ENCODE measurements at regions of chr9 and their contacts with region 1.

Region 1: DNA sequence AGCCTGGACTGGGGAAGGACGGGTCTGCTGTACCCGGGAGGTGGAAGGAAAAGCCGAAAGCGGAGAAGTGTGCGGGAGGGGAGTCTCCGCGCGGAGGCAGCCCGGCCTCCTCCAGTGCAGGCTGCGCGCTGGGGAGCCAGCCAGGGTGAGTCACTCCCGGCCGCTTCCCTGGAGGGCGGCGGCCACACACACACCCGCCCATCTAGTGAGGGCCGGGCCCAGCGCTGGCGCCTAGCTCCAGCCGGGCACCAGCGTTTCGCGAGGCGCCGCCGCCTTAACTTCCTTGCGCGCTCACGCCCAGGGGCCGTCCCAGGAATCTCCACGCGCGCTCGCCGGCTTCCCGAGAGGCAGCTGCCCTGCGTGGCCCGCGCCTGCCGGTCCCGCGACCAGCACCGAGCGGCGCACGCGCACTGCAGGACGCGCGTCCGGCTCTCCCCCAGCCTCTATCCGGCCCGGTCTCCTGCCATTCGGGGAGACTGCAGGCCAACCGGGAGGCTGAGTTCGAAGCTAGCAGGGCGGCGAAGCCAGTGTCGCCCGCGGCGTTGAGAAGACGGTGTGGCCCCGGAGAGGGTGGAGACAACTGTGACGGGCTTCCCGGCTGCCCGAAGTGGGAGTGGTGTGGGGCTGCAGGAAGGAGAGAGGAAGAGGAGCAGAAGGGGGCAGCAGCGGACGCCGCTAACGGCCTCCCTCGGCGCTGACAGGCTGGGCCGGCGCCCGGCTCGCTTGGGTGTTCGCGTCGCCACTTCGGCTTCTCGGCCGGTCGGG is at the start of gene JAK2:
- DNase-seq: peak; percentile 88
- ATAC-seq: peak; percentile 94
- H3K4me3 ChIP-seq: peak within 1 kb of the TSS; percentile 67 to 85 (median 81)
- H3K27ac ChIP-seq: peak within 1 kb of the TSS; percentile 91
- H3K4me1 ChIP-seq: peaks cover 41% of the 10 kb centered on the region
- H3K27me3 ChIP-seq: no peaks in the 10 kb centered on the region
- CTCF ChIP-seq: peak; percentile 82
- EP300 ChIP-seq: no peak
- POLR2A ChIP-seq: peak; percentile 69 to 70
- RAD21 ChIP-seq: no peak; the same call in none of the 2 replicates
- total RNA-seq, gene JAK2: 4.1 and 5.8 TPM in 2 replicates

Region 2: GRCh38 chr9:4590430-4591122 is 394.2 kb before region 1 on chr9:
- CTCF ChIA-PET with region 1: no interaction called
- POLR2A ChIA-PET with region 1: no interaction called
- in situ Hi-C with region 1: no loop called
- intact Hi-C with region 1: no loop called
- DNase-seq: no peak
- ATAC-seq: no peak
- H3K4me3 ChIP-seq: no peak overlapping the region
- H3K27ac ChIP-seq: no peak overlapping the region
- H3K4me1 ChIP-seq: no peaks in the 10 kb centered on the region
- H3K27me3 ChIP-seq: no peaks in the 10 kb centered on the region
- CTCF ChIP-seq: no peak
- EP300 ChIP-seq: no peak
- POLR2A ChIP-seq: no peak
- RAD21 ChIP-seq: no peak

Region 3: GRCh38 chr9:4740638-4741364 is 244.0 kb before region 1 on chr9 and contains the start of gene AK3:
- CTCF ChIA-PET with region 1: no interaction called
- POLR2A ChIA-PET with region 1: interaction called, 17 read pairs
- in situ Hi-C with region 1: no loop called
- intact Hi-C with region 1: no loop called
- DNase-seq: peak; percentile 83
- ATAC-seq: peak; percentile 93
- H3K4me3 ChIP-seq: peak within 1 kb of the TSS; percentile 93 to 98 (median 96)
- H3K27ac ChIP-seq: peak within 1 kb of the TSS; percentile 100
- H3K4me1 ChIP-seq: peaks cover 40% of the 10 kb centered on the region
- H3K27me3 ChIP-seq: no peaks in the 10 kb centered on the region
- CTCF ChIP-seq: peak; percentile 70
- EP300 ChIP-seq: peak in 1 of 2 experiments; percentile 50; a peak in 1 of 4 replicates
- POLR2A ChIP-seq: peak; percentile 87 to 89
- RAD21 ChIP-seq: peak; percentile 86
- total RNA-seq, gene AK3: 109 and 153 TPM in 2 replicates

Region 4: DNA sequence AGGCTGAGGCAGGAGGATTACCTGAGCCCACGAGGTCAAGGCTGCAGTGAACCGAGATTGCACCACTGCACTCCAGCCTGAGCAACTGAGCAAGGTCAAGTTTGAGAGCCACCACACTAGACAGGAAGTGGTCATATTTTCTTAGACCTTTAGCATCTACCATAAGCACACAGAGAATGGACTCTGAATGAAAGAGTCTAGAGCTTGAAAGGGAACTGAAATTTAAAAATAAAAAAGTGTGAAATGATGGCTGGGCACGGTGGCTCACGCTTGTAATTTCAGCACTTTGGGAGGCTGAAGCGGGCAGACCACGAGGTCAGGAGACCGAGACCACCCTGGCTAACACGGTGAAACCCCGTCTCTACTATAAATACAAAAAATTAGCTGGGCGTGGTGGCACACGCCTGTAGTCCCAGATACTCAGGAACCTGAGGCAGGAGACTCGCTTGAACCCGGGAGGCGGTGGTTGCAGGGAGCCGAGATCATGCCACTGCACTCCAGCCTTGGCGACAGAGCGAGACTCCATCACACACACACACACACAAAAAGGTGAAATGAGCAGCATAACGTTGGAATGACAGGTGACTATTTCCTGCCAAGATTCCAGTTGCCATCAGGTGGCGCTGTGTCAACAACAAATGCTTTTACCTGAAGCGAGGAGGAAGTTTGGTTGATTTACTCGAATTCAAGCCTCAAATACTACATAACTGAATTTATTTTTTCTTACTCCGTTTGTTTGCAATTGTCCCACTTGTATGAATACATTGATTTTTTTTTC is 222.5 kb before region 1 on chr9:
- CTCF ChIA-PET with region 1: interaction called, 24 read pairs
- POLR2A ChIA-PET with region 1: interaction called, 3 read pairs
- in situ Hi-C with region 1: loop called (anchors 5 kb)
- intact Hi-C with region 1: loop called (anchors 1 kb)
- DNase-seq: peak; percentile 72
- ATAC-seq: peak; percentile 73
- H3K4me3 ChIP-seq: peak overlapping the region; percentile 21 to 62 (median 55)
- H3K27ac ChIP-seq: no peak overlapping the region
- H3K4me1 ChIP-seq: peaks cover 23% of the 10 kb centered on the region
- H3K27me3 ChIP-seq: no peaks in the 10 kb centered on the region; a peak in 1 of 5 replicates
- CTCF ChIP-seq: peak; percentile 94
- EP300 ChIP-seq: no peak
- POLR2A ChIP-seq: no peak
- RAD21 ChIP-seq: peak; percentile 81

Region 5: DNA sequence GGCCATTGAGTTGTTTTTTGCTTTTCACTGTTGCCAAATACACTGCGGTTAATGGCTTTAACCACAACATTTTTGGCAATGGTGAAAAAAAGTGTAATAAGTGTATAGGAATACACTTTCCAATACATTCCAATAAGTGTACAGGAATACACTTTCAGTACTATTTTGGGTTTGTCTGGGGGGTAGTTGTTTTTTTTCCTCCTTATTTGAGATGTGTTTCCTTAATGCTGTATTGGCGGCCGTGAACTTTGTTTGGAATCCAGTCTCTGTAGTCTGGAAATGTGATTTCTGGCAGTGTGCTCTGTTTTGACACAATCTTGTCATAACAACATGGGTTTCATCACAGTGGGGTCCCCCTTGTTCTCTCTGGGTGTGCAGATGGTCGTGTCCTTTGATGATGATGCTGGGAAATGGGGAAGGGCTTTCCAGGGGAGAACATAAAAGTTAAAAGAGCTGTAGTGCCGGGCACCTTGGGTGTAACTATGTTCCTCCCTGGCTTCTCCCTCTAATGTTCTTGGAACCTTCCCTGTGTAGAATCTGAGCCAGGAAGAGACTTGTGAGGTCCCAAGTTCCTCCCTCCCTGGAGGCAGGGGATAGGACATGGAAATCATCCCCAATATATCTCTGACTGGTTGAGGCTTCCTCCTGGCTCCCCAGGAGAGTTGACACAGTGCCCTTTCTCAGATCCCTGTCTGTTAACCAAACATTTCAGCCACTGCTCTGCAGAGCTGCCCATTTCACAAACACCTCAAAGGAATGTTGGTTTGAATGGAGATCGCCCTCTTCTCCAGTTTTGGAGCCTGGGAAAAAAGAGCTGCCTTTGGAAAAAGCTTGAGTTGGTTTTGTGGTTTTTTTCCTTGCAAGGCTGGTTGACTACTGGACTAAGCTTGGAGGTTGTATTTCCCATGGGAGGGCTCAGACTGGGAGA is 147.3 kb before region 1 on chr9:
- CTCF ChIA-PET with region 1: no interaction called
- POLR2A ChIA-PET with region 1: interaction called, 8 read pairs
- in situ Hi-C with region 1: no loop called
- intact Hi-C with region 1: loop called (anchors 2 kb)
- DNase-seq: peak; percentile 81
- ATAC-seq: peak; percentile 54
- H3K4me3 ChIP-seq: peak overlapping the region in 1 of 3 experiments; percentile 31; a peak in 2 of 6 replicates
- H3K27ac ChIP-seq: peak overlapping the region; percentile 75
- H3K4me1 ChIP-seq: peaks cover 100% of the 10 kb centered on the region
- H3K27me3 ChIP-seq: no peaks in the 10 kb centered on the region
- CTCF ChIP-seq: no peak
- EP300 ChIP-seq: 0 out of 4 replicates have a peak, but pooled peaks of 1 of the 2 experiments have one; percentile 33
- POLR2A ChIP-seq: 0 out of 4 replicates have a peak, but pooled peaks of 1 of the 2 experiments have one; percentile 23
- RAD21 ChIP-seq: no peak

Region 6: GRCh38 chr9:4923580-4924544 is 60.9 kb before region 1 on chr9:
- CTCF ChIA-PET with region 1: interaction called, 4 read pairs
- POLR2A ChIA-PET with region 1: no interaction called
- in situ Hi-C with region 1: no loop called
- intact Hi-C with region 1: loop called (anchors 1 kb)
- DNase-seq: peak; percentile 51
- ATAC-seq: peak; percentile 81
- H3K4me3 ChIP-seq: no peak overlapping the region
- H3K27ac ChIP-seq: no peak overlapping the region
- H3K4me1 ChIP-seq: no peaks in the 10 kb centered on the region
- H3K27me3 ChIP-seq: no peaks in the 10 kb centered on the region
- CTCF ChIP-seq: peak; percentile 64
- EP300 ChIP-seq: no peak
- POLR2A ChIP-seq: no peak
- RAD21 ChIP-seq: peak; percentile 77; the same call in 1 of the 2 replicates

Region 7: DNA sequence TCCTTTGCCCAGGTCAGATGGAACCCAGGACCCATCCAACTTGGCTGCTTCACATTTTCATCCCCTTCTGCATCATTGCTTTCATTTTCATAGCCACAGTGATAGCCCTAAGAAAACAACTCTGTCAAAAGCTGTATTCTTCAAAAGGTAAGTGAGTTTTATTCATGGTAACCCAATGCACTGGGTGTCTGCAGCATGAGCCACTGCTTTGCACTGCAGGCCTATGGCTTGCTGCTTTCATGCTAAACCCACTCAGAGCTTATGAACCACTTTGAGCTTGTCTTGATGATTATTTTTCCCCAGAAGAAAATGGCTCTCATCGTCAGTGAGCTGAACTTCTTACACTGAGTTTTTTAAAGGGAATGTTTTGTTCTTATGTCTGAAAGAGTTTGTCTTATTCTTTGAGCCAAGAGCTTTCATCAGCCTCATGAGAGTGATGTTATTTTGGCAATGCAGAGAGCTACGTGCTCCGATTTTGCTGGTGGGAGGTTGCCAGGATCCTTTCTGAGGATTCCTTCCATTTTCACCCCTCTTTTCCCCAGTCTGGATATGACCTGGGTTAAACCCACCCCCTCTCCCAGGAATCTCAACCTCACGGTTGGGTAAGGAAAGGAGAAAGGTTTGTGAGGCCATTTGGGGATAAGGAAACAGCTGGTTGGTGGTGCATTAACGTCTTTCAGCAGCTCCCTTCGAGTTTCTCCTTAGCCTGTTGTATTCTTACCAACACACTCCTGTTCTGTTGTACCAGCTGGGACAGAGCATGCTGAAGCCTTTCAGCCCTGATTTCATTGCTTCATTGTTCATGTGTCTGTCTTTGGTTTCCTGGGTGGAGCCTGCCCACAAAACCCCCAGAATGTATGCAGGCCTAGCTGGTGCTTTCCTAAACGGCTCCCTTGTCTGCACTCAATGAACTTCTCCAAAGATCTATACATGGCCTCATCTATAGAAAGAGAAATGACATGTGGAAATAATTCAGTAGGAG is 573.1 kb after region 1 on chr9:
- CTCF ChIA-PET with region 1: no interaction called
- POLR2A ChIA-PET with region 1: no interaction called
- in situ Hi-C with region 1: no loop called
- intact Hi-C with region 1: no loop called
- DNase-seq: no peak
- ATAC-seq: no peak
- H3K4me3 ChIP-seq: no peak overlapping the region
- H3K27ac ChIP-seq: no peak overlapping the region
- H3K4me1 ChIP-seq: no peaks in the 10 kb centered on the region
- H3K27me3 ChIP-seq: peaks cover 0 to 4% of the 10 kb centered on the region in 2 experiments; a peak in 1 of 5 replicates
- CTCF ChIP-seq: no peak
- EP300 ChIP-seq: no peak
- POLR2A ChIP-seq: no peak
- RAD21 ChIP-seq: no peak

Region 8: GRCh38 chr9:5608298-5609225 is 623.8 kb after region 1 on chr9:
- CTCF ChIA-PET with region 1: no interaction called
- POLR2A ChIA-PET with region 1: no interaction called
- in situ Hi-C with region 1: no loop called
- intact Hi-C with region 1: loop called (anchors 10 kb)
- DNase-seq: peak; percentile 49
- ATAC-seq: peak; percentile 99
- H3K4me3 ChIP-seq: peak overlapping the region; percentile 52 to 76 (median 66)
- H3K27ac ChIP-seq: peak overlapping the region; percentile 5
- H3K4me1 ChIP-seq: peaks cover 5% of the 10 kb centered on the region
- H3K27me3 ChIP-seq: no peaks in the 10 kb centered on the region
- CTCF ChIP-seq: peak; percentile 58
- EP300 ChIP-seq: no peak
- POLR2A ChIP-seq: no peak
- RAD21 ChIP-seq: no peak